ENCODE measurements at regions of chr10 and their contacts with region 1.

Region 1: GRCh38 chr10:17257466-17258321 is 29.7 kb downstream of the VIM start:
- DNase-seq: peak in 8 of 9 experiments; percentile 13 to 81 (median 57)
- ATAC-seq: peak; percentile 78
- H3K4me3 ChIP-seq: no peak overlapping the region
- H3K4me3 Mint-ChIP-seq: no peak overlapping the region
- H3K27ac ChIP-seq: no peak overlapping the region
- H3K27ac Mint-ChIP-seq: no peak overlapping the region
- H3K4me1 ChIP-seq: peaks cover 3% of the 10 kb centered on the region
- H3K4me1 Mint-ChIP-seq: peaks cover 4% of the 10 kb centered on the region
- H3K27me3 ChIP-seq: no peaks in the 10 kb centered on the region
- H3K27me3 Mint-ChIP-seq: no peaks in the 10 kb centered on the region
- CTCF ChIP-seq: peak; percentile 87

Region 2: DNA sequence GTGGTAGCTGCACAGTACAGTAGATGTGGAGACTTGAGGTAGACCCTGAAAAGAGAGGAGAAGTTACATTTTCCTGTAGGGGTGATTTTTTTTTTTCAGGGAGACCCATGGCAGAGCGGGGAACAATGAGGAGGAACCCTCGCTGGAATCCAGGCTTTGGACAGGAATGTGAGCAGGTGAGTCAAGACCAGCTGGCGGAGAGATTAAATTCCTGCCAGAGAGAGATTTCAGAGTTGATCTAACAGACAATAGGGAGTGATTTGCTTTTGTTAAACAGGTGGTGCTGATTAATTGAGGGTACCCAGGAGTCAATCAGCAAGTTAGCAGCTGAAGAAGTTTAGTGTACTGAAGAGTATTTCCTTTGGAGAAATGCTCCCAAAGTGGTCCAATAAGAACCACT is 1355.8 kb before region 1 on chr10:
- CTCF ChIA-PET with region 1: no interaction called
- POLR2A ChIA-PET with region 1: no interaction called
- intact Hi-C with region 1: loop called in 1 of 2 experiments (anchors 5 kb)
- DNase-seq: no peak
- ATAC-seq: no peak
- H3K4me3 ChIP-seq: no peak overlapping the region
- H3K4me3 Mint-ChIP-seq: no peak overlapping the region
- H3K27ac ChIP-seq: no peak overlapping the region
- H3K27ac Mint-ChIP-seq: no peak overlapping the region
- H3K4me1 ChIP-seq: no peaks in the 10 kb centered on the region
- H3K4me1 Mint-ChIP-seq: no peaks in the 10 kb centered on the region
- H3K27me3 ChIP-seq: peaks cover 0 to 7% of the 10 kb centered on the region in 2 experiments
- H3K27me3 Mint-ChIP-seq: peaks cover 27% of the 10 kb centered on the region
- CTCF ChIP-seq: no peak

Region 3: GRCh38 chr10:16828114-16828568 is 429.6 kb before region 1 on chr10:
- CTCF ChIA-PET with region 1: interaction called, 18 read pairs
- POLR2A ChIA-PET with region 1: no interaction called
- intact Hi-C with region 1: loop called (anchors 1 kb)
- DNase-seq: peak in 8 of 9 experiments; percentile 47 to 87 (median 63)
- ATAC-seq: peak; percentile 96
- H3K4me3 ChIP-seq: no peak overlapping the region
- H3K4me3 Mint-ChIP-seq: no peak overlapping the region
- H3K27ac ChIP-seq: no peak overlapping the region
- H3K27ac Mint-ChIP-seq: peak overlapping the region; percentile 45
- H3K4me1 ChIP-seq: no peaks in the 10 kb centered on the region
- H3K4me1 Mint-ChIP-seq: peaks cover 4% of the 10 kb centered on the region
- H3K27me3 ChIP-seq: no peaks in the 10 kb centered on the region
- H3K27me3 Mint-ChIP-seq: no peaks in the 10 kb centered on the region
- CTCF ChIP-seq: peak; percentile 69

Region 4: GRCh38 chr10:16835228-16835627 is 422.5 kb before region 1 on chr10:
- CTCF ChIA-PET with region 1: interaction called, 21 read pairs
- POLR2A ChIA-PET with region 1: no interaction called
- intact Hi-C with region 1: no loop called
- DNase-seq: peak in 6 of 9 experiments; percentile 14 to 71 (median 46)
- ATAC-seq: peak; percentile 99
- H3K4me3 ChIP-seq: peak overlapping the region in 1 of 2 experiments; percentile 27
- H3K4me3 Mint-ChIP-seq: peak overlapping the region; percentile 66
- H3K27ac ChIP-seq: no peak overlapping the region
- H3K27ac Mint-ChIP-seq: peak overlapping the region; percentile 63
- H3K4me1 ChIP-seq: peaks cover 7% of the 10 kb centered on the region
- H3K4me1 Mint-ChIP-seq: peaks cover 11% of the 10 kb centered on the region
- H3K27me3 ChIP-seq: no peaks in the 10 kb centered on the region
- H3K27me3 Mint-ChIP-seq: no peaks in the 10 kb centered on the region
- CTCF ChIP-seq: no peak

Region 5: DNA sequence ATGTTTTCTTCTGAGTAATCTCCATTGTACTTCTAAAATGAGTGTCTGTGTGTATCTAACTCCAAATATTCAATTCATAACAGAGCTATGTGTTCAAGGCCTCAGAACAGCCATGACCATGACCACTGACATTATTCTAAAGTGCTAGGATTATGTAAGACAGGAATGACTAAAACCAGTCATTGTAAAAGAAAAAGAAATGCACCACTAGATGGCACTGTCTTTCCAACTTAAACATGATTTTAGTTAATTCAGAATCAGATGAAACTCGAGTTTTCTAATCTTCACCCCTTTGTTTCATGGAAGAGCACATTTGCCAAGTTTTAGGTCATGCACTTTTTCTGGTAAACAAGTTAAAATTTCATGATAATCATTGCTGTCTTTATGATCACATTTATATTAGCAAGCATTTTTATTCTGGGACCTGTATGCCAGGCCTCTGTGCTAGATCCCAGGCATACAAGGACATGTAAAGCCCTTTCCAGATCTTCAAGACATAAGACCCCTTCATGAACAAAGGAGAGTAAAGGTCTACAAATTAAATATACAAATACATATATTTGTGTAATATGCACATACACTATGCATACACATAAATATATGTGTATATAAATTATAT is 414.3 kb before region 1 on chr10:
- CTCF ChIA-PET with region 1: interaction called, 25 read pairs
- POLR2A ChIA-PET with region 1: no interaction called
- intact Hi-C with region 1: loop called (anchors 1 kb)
- DNase-seq: peak in 3 of 9 experiments; percentile 16 to 78 (median 63)
- ATAC-seq: peak; percentile 51
- H3K4me3 ChIP-seq: no peak overlapping the region
- H3K4me3 Mint-ChIP-seq: no peak overlapping the region
- H3K27ac ChIP-seq: no peak overlapping the region
- H3K27ac Mint-ChIP-seq: no peak overlapping the region
- H3K4me1 ChIP-seq: no peaks in the 10 kb centered on the region
- H3K4me1 Mint-ChIP-seq: no peaks in the 10 kb centered on the region
- H3K27me3 ChIP-seq: no peaks in the 10 kb centered on the region
- H3K27me3 Mint-ChIP-seq: no peaks in the 10 kb centered on the region
- CTCF ChIP-seq: peak; percentile 72

Region 6: DNA sequence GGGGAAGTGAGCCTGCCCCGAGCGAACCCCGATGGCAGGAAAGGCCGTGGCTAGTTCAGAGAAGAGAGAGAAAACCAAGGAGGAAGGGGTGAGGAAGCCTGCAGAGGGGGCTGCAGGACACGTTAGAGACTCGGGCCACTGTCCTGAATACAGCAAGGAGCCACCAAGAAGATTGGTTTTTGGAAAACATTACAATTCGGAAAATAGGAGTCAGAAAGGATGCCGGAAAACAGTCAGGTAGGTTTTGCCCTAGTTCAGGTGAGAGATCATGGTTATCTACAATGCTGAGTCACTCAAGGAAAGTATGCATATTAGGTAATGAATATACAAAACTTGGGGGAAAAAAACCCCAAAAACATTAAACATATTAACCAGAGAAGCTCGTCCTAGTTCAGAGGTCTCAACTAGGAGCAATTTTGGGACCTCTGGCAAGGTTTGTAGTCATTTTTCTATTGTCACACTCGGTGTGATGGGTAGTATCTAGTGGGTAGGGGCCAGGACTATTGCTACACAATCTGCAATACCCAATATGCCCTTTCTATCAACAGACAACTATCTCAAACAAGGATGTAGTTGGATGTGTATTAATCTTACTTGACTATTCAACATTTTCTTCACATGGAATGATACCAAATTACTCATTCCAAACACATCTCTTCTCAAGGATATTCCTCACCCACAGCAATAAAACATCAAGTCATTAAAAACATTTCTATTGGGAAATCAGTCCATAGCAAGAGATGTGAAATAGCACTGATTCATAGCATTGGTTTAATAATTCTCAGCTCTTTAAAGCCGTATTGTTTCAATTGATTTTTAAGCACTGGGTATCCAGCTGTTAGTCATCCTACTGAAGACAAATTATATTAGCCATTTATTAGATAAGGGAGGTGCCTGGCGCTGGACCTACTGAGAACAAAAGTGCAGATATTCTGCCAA is 366.1 kb before region 1 on chr10:
- CTCF ChIA-PET with region 1: interaction called, 13 read pairs
- POLR2A ChIA-PET with region 1: no interaction called
- intact Hi-C with region 1: loop called in 1 of 2 experiments (anchors 1 kb)
- DNase-seq: peak in 7 of 9 experiments; percentile 9 to 63 (median 34)
- ATAC-seq: peak; percentile 67
- H3K4me3 ChIP-seq: no peak overlapping the region
- H3K4me3 Mint-ChIP-seq: peak overlapping the region; percentile 77
- H3K27ac ChIP-seq: no peak overlapping the region
- H3K27ac Mint-ChIP-seq: peak overlapping the region; percentile 58
- H3K4me1 ChIP-seq: no peaks in the 10 kb centered on the region
- H3K4me1 Mint-ChIP-seq: peaks cover 9% of the 10 kb centered on the region
- H3K27me3 ChIP-seq: no peaks in the 10 kb centered on the region
- H3K27me3 Mint-ChIP-seq: no peaks in the 10 kb centered on the region
- CTCF ChIP-seq: peak; percentile 21

Region 7: DNA sequence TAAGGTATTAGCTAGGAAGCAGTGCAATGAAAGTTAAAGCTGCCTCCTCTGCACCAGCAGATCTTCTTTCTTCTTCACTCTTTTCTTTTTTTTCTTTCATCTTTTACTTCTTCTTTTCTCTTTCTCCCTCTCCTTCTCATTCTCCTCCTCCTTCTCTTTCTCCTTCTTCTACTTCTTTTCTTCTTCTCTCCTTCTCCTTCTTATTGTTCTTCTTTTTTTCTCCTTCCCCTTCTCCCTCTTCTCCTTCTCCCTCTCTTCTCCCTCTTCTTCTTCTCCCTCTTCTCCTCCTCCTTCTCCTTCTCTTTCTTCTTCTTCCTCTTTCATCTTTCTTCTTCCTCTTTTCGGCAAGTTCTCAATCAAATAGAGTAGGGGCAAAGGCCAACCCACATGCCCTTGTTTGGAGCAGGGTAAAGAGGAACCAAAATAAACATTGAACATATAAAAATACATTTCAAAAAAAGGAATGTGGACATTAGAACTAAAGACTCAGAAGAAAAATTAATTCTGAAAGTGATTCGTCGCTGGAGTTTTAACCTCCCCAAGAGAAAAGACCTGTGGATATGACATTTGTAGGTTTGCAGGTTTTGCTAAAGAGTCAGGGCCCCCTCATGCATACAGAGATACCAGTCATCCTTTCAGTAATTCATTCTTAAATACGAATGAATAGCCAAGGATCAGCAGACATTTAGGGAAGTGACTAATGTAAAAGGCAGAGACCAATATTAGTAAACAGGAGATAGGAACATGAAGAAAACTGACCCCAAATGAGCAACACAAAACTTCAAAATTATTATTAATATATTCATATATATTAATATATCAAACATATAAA is 347.5 kb before region 1 on chr10:
- CTCF ChIA-PET with region 1: interaction called, 3 read pairs
- POLR2A ChIA-PET with region 1: no interaction called
- intact Hi-C with region 1: loop called (anchors 1 to 5 kb)
- DNase-seq: no peak
- ATAC-seq: no peak
- H3K4me3 ChIP-seq: no peak overlapping the region
- H3K4me3 Mint-ChIP-seq: no peak overlapping the region
- H3K27ac ChIP-seq: no peak overlapping the region
- H3K27ac Mint-ChIP-seq: no peak overlapping the region
- H3K4me1 ChIP-seq: no peaks in the 10 kb centered on the region
- H3K4me1 Mint-ChIP-seq: peaks cover 2% of the 10 kb centered on the region
- H3K27me3 ChIP-seq: no peaks in the 10 kb centered on the region
- H3K27me3 Mint-ChIP-seq: no peaks in the 10 kb centered on the region
- CTCF ChIP-seq: no peak

Measured in CD8-positive, alpha-beta T cell (primary cell).